Panc1 (cell line): ENCODE measurements at regions of chr21 and their contacts with region 1.

Region 1: GRCh38 chr21:17387030-17387617 is 125.7 kb upstream of the CXADR start:
- DNase-seq: peak; percentile 47
- ATAC-seq: peak; percentile 78
- H3K4me3 ChIP-seq: no peak overlapping the region
- H3K27ac ChIP-seq: no peak overlapping the region
- H3K4me1 ChIP-seq: no peaks in the 10 kb centered on the region
- H3K27me3 ChIP-seq: no peaks in the 10 kb centered on the region
- CTCF ChIP-seq: peak; percentile 66; the same call in 1 of the 2 replicates

Region 2: DNA sequence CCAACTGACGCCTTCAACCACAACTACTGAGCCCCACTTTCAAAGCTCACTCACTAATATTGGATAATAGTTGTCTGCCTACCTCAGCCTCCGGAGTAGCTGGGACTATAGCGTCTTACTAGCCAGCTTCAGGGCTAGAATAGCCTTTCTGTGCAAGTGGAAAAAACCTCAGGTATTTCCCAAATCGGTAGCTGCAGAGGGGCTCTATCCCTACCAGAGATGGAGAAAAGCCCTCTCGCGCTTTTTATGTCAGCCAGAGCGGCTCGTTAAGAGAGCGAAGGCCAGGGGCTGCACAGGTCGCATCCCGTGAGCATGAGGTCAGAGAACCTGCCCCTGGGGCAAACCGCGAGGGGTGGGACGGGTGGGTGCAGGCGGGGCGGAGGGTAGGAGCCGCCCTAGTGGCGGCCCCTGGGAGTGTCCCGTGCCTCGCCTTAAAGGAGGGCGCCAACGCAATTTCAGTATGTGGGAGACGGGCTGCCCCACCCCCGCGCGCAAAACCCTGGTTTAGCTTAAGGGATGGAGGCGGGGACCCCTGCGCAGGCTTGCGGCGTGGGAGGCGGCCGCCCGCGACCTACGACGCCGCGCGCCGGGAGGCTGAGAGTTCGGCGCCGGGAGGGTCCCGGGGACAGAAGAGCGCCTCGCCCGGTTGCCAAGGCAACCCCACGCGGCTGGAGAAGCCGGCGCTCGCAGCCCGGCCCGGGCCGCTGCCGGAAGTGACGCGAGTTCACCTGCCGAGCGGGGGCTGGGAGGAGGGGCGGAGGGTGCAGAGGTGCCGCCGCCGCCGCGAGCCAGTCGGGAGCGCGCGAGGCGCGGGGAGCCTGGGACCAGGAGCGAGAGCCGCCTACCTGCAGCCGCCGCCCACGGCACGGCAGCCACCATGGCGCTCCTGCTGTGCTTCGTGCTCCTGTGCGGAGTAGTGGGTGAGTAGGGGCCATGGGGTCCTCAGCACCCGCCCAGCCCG is 125.4 kb after region 1 on chr21 and contains the start of gene CXADR:
- CTCF ChIA-PET with region 1: no interaction called
- POLR2A ChIA-PET with region 1: no interaction called
- in situ Hi-C with region 1: no loop called
- intact Hi-C with region 1: loop called (anchors 5 kb)
- DNase-seq: no peak
- ATAC-seq: peak; percentile 95
- H3K4me3 ChIP-seq: peak within 1 kb of the TSS; percentile 67 to 85
- H3K27ac ChIP-seq: peak within 1 kb of the TSS; percentile 83
- H3K4me1 ChIP-seq: peaks cover 4% of the 10 kb centered on the region; the same call in 1 of the 2 replicates
- H3K27me3 ChIP-seq: no peaks in the 10 kb centered on the region
- CTCF ChIP-seq: peak; percentile 76
- total RNA-seq, gene CXADR: 24.7 TPM

Region 3: GRCh38 chr21:17585875-17586450 is 198.8 kb after region 1 on chr21:
- CTCF ChIA-PET with region 1: interaction called, 7 read pairs
- POLR2A ChIA-PET with region 1: no interaction called
- in situ Hi-C with region 1: no loop called
- intact Hi-C with region 1: loop called (anchors 2 kb)
- DNase-seq: peak; percentile 15
- ATAC-seq: no peak
- H3K4me3 ChIP-seq: no peak overlapping the region
- H3K27ac ChIP-seq: no peak overlapping the region
- H3K4me1 ChIP-seq: no peaks in the 10 kb centered on the region
- H3K27me3 ChIP-seq: no peaks in the 10 kb centered on the region
- CTCF ChIP-seq: peak; percentile 60; the same call in 1 of the 2 replicates